Sigmoid colon (tissue), 7 donors: ENCODE measurements at regions of chr3 and their contacts with region 1.

Region 1: GRCh38 chr3:141452036-141452435 is 34.8 kb upstream of the RASA2 start:
- DNase-seq: no peak
- H3K4me3 ChIP-seq: no peak overlapping the region
- H3K27ac ChIP-seq: peak overlapping the region; percentile 2 to 96 (median 24)
- H3K4me1 ChIP-seq: peaks cover 0 to 57% (median 29%) of the 10 kb centered on the region in 4 donors
- H3K27me3 ChIP-seq: no peaks in the 10 kb centered on the region
- CTCF ChIP-seq: peak; percentile 33 to 68 (median 46)
- EP300 ChIP-seq: no peak
- POLR2A ChIP-seq: no peak

Region 2: DNA sequence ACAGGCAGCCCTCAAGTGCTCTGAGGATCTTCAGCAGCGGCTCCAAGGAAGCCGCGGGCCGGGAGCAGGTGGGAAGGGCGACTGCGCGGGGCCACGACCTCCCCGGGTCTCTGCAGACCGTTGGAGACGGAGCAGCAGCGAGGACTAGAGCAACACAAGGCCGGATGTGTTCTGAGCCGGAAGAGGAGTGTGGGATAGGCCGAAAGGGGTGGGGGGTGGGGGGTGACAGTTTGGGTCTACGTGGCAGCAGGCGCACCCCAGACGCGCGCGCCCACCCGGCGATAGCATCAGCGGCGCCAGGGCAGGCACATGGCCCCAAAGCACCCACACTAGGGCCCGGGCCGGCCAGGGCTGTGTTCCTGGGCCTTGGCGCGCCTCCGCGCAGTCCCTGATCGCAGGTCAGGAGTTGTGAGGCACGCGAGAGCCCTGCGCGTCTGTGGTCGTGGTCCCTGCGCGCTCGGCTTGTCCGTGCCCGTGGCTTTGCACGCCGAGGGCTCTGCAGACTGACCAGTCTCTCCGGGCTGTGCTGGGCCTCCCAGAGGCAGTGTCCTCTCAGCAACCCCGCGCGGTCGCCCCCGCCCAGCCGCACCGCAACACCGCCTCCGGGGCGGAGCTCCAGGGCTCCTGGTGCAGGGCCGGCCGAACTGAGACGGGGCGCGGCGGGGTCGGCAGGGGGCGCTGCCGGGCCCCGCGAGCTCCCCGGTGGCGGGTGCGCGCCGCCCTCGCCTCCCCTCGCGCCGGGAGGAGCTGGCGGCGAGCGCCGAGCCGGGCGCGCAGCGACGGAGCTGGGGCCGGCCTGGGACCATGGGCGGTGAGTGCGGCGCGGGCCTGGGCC is 220.7 kb before region 1 on chr3 and contains the start of gene PXYLP1:
- intact Hi-C with region 1: loop called (anchors 5 kb)
- DNase-seq: peak; percentile 96
- H3K4me3 ChIP-seq: peak within 1 kb of the TSS; percentile 80 to 95 (median 92)
- H3K27ac ChIP-seq: peak within 1 kb of the TSS; percentile 86 to 93 (median 90)
- H3K4me1 ChIP-seq: peaks cover 0 to 24% (median 15%) of the 10 kb centered on the region in 4 donors
- H3K27me3 ChIP-seq: no peaks in the 10 kb centered on the region
- CTCF ChIP-seq: peak in 1 of 4 experiments; percentile 61
- EP300 ChIP-seq: no peak
- POLR2A ChIP-seq: peak; percentile 33 to 52
- total RNA-seq, gene PXYLP1: 5.7 to 12.2 (median 7.5) TPM

Region 3: GRCh38 chr3:141311496-141312353 is 140.3 kb before region 1 on chr3:
- intact Hi-C with region 1: loop called (anchors 2 kb)
- DNase-seq: peak; percentile 99
- H3K4me3 ChIP-seq: peak overlapping the region; percentile 56 to 68 (median 59)
- H3K27ac ChIP-seq: peak overlapping the region; percentile 73 to 84 (median 77)
- H3K4me1 ChIP-seq: peaks cover 0 to 19% (median 14%) of the 10 kb centered on the region in 4 donors
- H3K27me3 ChIP-seq: no peaks in the 10 kb centered on the region
- CTCF ChIP-seq: peak; percentile 51 to 75 (median 69)
- EP300 ChIP-seq: peak in 1 of 4 donors; percentile 77
- POLR2A ChIP-seq: peak; percentile 18 to 33

Region 4: DNA sequence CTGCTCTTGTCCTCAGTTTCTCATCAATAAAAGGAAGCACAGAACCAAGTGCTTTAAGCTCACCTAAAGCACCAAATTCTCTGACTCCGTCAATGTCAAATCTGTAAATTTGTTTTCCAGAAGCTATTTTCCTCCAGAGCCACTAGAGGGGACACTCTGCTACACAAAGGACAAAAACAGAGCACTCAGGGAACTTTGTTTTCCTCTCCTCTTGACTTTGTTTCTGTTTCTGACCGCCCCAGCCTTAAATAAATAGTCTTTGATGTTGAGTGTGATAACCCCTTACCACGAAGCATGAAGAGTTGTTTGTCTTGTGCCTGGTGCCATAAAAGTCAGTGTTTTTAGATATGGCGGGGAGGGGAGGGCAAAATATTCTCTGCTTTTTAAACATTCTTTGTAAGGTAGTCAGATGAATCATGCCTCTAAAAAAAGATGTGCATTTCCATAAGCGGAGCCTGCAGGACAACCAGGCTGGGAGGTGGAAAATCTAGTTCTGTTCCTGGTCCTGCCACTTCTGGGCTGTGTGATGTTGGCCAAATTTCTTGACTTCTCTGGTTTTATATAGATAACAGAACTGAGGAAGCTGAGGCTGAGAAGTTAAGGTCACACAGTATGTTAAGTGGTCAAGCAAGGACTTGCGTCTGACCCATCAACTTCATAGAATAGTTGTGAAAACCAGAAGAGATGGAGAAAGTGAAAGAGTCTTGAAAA is 91.0 kb before region 1 on chr3:
- intact Hi-C with region 1: loop called (anchors 1 kb)
- DNase-seq: no peak
- H3K4me3 ChIP-seq: peak overlapping the region in 2 of 4 donors; percentile 6 to 28
- H3K27ac ChIP-seq: peak overlapping the region; percentile 42 to 70 (median 63)
- H3K4me1 ChIP-seq: peaks cover 0 to 16% (median 15%) of the 10 kb centered on the region in 4 donors
- H3K27me3 ChIP-seq: no peaks in the 10 kb centered on the region
- CTCF ChIP-seq: peak; percentile 61 to 87 (median 76)
- EP300 ChIP-seq: no peak
- POLR2A ChIP-seq: no peak

Region 5: DNA sequence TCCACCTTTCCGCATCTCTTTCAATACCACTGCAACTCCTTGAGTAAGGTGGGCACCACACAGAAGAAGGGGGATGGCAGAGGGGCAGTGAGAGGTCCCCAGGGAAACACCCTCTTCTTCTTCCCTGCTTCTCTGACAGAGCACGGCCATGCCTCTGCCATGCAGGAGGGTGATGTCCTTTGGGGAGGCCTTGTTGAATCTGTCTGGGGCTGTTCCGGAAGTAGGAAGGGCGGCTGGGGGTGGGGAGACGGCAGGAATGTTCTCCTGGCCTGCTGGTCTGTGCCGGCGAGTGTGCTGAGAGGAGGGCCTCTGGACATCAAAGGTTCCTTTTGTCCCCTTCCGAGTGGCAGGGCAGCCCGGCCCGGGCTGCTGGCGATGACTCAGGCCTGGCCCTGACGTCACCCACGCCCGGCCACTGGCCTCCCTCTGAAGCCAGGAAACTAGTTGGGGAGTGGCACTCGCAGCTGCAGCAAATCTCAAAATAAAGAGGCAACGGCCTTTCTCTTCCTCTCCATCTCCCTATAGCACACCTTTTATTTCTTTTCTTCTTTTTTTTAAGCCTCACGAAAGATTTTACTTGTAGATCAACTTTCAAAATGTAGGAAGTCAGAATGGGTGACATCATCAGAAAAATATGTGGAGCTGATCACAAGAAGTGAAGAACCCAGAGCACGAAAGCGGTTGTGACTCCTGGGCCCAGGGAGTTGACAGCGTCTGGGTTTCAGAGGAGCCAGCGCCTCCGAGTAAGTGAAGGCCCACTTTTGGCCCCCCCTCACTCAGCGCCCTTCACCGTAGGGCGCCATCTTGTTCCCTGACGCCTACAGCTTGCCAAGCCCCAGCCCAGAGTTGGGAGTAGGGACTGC is 83.7 kb before region 1 on chr3 and contains the start of gene ZBTB38:
- intact Hi-C with region 1: loop called (anchors 2 kb)
- DNase-seq: peak; percentile 95
- H3K4me3 ChIP-seq: peak within 1 kb of the TSS in 3 of 4 donors; percentile 13 to 24 (median 20)
- H3K27ac ChIP-seq: peak within 1 kb of the TSS; percentile 81 to 95 (median 90)
- H3K4me1 ChIP-seq: peaks cover 0 to 46% (median 46%) of the 10 kb centered on the region in 4 donors
- H3K27me3 ChIP-seq: no peaks in the 10 kb centered on the region
- CTCF ChIP-seq: no peak
- EP300 ChIP-seq: peak in 2 of 4 donors; percentile 60 to 65
- POLR2A ChIP-seq: peak; percentile 41 to 42
- total RNA-seq, gene ZBTB38: 150 to 178 (median 155) TPM